ENCODE measurements at regions of chr15 and their contacts with region 1.

Region 1: DNA sequence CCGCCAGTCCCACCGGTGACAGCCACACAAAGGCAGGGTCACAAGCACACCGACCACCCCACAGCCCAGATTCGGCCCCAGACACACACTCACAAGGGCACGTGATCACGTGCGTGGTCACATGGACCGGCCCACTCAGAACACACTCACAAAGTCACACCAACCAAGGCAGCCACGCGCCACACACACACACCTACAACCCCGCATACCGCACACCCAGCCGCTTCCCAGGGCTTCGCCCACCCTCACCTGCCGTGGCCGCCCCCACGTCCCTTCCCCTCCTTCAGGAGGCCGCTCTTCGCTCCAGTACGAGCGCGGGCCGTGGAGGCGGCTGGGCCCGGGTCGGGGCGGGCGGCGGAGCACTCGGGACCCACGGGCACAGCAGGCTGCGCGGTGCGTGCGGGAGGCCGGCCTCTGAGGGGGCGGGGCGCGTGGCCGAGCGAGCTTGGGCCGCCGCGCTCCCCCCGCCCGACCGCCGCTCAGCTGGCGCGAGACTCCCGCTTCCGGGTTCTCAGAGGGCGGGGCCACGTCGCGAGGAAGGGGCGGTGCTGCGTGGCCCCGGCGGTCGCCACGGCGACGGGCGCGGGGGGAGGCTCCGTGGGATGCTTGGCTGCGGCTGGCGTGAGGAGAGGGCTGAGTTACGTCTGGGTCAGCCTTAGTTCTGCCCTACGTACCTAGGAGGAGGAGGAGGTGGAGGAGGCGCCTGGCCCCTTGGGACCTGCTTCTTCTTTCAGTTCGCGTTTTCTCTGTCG is at the start of gene SPG21:
- DNase-seq: peak; percentile 94
- ATAC-seq: peak; percentile 96
- H3K4me3 Mint-ChIP-seq: peak within 1 kb of the TSS; percentile 96
- H3K27ac Mint-ChIP-seq: peak within 1 kb of the TSS; percentile 88
- H3K4me1 Mint-ChIP-seq: peaks cover 37% of the 10 kb centered on the region
- H3K27me3 Mint-ChIP-seq: no peaks in the 10 kb centered on the region
- total RNA-seq, gene SPG21: 74.1 to 79.1 TPM

Region 2: DNA sequence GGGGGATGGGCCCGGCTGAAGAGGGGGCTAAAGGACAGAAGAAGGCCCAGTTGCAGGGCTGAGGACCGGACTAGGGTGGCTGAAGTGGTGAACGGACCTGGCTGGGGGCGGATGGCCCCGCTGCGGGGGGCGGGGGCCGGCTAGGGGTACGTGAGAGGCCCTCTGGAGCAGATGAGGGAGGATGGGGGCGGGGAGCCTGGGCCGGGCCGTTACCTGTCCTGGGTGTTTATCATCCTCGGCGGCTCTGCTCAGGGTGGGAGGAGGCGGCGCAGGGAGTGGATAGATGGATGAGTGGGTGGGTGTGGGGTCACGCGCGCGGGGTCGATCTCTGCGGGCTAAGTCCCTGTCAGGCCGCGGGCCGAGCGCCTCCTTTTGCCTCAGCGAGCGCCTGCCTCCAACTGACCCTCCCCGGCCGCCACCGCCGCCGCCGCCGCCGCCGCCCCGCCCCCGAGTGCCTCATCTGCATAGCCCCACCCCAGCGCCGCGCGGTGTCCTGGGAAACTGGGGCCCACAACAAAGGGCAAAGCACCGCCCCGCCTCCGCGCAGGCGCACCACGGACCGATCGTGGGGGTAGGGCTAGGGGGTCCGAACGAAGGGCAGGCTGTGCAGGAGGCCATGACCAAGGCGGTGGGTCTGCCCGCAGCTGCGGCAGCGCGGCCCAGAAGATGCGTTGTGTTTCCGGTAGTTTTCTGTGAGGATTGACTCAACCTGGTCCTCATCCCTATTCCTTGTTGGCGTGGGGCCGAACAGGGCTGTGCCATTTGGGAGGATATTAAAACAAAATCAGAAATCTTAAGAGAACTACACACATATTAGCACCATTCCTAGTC is 286.6 kb before region 1 on chr15:
- CTCF ChIA-PET with region 1: no interaction called
- POLR2A ChIA-PET with region 1: no interaction called
- intact Hi-C with region 1: loop called in 1 of 2 experiments (anchors 1 kb)
- DNase-seq: peak; percentile 98
- ATAC-seq: peak; percentile 91
- H3K4me3 Mint-ChIP-seq: peak overlapping the region; percentile 72
- H3K27ac Mint-ChIP-seq: peak overlapping the region; percentile 86
- H3K4me1 Mint-ChIP-seq: peaks cover 52% of the 10 kb centered on the region
- H3K27me3 Mint-ChIP-seq: no peaks in the 10 kb centered on the region

Region 3: DNA sequence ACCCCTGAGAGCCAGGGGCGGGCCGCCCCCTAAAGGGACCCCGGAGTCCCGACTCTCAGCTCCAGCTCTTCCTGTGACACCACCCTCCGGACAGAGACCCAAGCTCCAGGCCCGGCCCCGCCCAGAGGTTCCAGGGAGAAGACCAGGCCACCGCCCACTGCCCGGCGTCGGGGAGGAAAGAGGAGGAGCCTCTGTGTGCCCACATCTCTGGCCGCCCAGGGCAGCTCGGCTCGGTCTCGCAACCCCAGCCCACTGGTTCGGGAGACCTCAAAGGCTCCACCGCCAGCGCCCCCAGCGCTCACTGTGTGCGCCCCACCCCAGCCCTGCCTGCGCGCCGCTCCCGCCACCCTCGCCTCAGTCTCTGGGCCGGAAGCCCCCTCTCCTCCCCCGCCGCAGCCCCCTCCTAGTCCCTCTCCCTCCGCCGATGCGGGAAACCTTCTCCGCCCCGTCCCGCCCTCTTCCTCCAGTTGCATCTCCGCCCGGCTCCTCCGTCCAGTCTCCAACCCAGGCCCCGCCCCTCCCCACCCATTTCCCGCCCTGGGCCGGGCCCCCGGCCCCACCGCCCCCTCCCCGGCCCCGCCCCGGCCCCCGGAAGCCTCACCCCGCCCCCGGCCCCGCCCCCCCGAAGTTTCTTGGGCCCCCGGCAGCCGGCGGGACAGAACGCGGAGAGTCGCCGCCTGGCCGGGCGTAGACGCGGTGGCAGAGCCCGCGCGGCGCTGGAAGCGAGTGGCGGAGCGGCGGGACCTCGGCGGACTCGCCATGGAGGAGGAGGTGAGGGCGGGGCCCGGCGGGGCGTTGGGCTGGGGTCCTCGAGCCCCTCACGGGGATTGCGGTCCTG is 148.1 kb before region 1 on chr15 and contains the start of gene PLEKHO2:
- CTCF ChIA-PET with region 1: no interaction called
- POLR2A ChIA-PET with region 1: no interaction called
- intact Hi-C with region 1: loop called in 1 of 2 experiments (anchors 1 kb)
- DNase-seq: peak; percentile 94
- ATAC-seq: peak; percentile 73
- H3K4me3 Mint-ChIP-seq: peak within 1 kb of the TSS; percentile 88
- H3K27ac Mint-ChIP-seq: peak within 1 kb of the TSS; percentile 84
- H3K4me1 Mint-ChIP-seq: peaks cover 66% of the 10 kb centered on the region
- H3K27me3 Mint-ChIP-seq: no peaks in the 10 kb centered on the region
- total RNA-seq, gene PLEKHO2: 11.4 to 13.3 TPM

Region 4: DNA sequence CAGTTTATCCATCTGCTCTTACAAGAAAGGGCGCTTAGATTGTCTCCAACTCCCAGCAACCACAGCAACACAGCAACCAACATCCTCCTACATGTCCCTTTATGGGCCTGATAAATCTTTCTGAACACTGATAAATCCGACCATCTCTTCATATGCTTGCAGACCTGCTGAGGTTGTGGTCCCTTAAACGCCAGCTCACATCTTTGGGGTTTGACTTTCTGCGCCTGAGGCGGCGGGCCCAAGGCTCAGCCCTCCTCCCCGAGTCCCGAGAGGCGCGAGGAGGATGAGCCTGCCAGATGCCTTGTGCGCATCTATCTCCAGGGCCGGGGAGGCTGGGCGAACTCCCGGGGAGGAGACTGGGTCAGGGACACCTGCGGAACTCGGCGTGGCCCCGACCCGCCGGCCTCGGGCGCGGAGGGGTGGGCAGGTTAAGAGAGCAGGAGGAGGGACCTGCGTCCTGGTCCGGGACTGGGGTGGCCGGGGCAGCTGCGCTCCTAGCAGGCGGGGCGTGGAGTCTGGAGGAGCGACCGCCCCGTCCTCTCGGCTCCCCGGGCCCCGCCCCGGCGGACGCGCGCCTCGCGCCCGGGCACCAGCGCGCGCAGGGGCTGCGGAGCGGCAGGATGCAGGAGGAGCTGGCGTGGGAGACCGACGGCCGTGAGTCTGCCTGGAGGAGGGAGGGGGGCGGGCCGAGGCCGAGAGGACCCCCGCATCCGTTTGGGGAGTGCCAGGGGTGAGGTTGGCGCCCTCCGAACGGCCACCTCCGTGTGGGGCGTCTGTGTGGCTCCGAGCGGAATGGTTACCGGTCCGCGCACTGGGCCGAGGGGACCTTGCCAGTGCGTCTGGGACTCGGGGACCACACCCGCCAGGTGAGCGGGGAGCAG is 78.0 kb before region 1 on chr15 and contains the start of gene ANKDD1A:
- CTCF ChIA-PET with region 1: no interaction called
- POLR2A ChIA-PET with region 1: no interaction called
- intact Hi-C with region 1: no loop called
- DNase-seq: peak; percentile 71
- ATAC-seq: peak; percentile 96
- H3K4me3 Mint-ChIP-seq: peak within 1 kb of the TSS; percentile 60
- H3K27ac Mint-ChIP-seq: no peak within 1 kb of the TSS
- H3K4me1 Mint-ChIP-seq: peaks cover 4% of the 10 kb centered on the region
- H3K27me3 Mint-ChIP-seq: peaks cover 16% of the 10 kb centered on the region
- total RNA-seq, gene ANKDD1A: 0.81 to 1.0 TPM